PC-9 (cell line): ENCODE measurements at regions of chr15 and their contacts with region 1.

Region 1: GRCh38 chr15:63221346-63221745 is 31.9 kb downstream of the RAB8B start:
- DNase-seq: peak in 1 of 2 experiments; percentile 47
- H3K4me3 ChIP-seq: no peak overlapping the region
- H3K27ac ChIP-seq: peak overlapping the region; percentile 17; the same call in 1 of the 2 replicates
- H3K4me1 ChIP-seq: peaks cover 45% of the 10 kb centered on the region
- H3K27me3 ChIP-seq: no peaks in the 10 kb centered on the region
- CTCF ChIP-seq: no peak

Region 2: DNA sequence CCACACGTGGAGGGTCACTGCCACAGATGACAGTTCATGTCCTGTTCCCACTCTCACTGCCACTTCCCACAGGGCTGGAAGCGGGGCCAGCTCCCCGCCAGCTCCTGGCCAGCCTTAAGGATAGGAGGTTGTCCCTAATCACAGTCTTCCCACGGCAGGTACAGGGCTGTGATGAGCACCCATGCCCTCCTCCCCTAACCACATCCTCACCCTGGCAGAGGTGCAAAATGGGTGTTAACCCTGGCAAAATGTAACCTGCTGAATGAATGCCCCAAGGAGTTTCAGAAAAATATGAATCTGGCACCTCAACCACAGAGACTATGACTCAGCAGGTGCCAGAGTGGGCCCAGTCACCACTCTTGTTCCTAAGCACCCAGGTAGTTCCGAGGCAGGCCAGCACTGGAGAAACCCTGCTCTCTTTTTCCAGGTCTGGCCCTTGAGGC is 363.9 kb before region 1 on chr15:
- CTCF ChIA-PET with region 1: no interaction called
- POLR2A ChIA-PET with region 1: no interaction called
- intact Hi-C with region 1: no loop called
- DNase-seq: peak; percentile 85 to 93
- H3K4me3 ChIP-seq: peak overlapping the region; percentile 38; the same call in 1 of the 2 replicates
- H3K27ac ChIP-seq: peak overlapping the region; percentile 99
- H3K4me1 ChIP-seq: peaks cover 69% of the 10 kb centered on the region
- H3K27me3 ChIP-seq: no peaks in the 10 kb centered on the region
- CTCF ChIP-seq: no peak

Region 3: GRCh38 chr15:63077952-63078351 is 143.4 kb before region 1 on chr15:
- CTCF ChIA-PET with region 1: interaction called, 12 read pairs
- POLR2A ChIA-PET with region 1: no interaction called
- intact Hi-C with region 1: no loop called
- DNase-seq: no peak
- H3K4me3 ChIP-seq: no peak overlapping the region
- H3K27ac ChIP-seq: no peak overlapping the region
- H3K4me1 ChIP-seq: no peaks in the 10 kb centered on the region
- H3K27me3 ChIP-seq: no peaks in the 10 kb centered on the region
- CTCF ChIP-seq: no peak